Motor neuron (in vitro differentiated cells): ENCODE measurements at regions of chr4 and their contacts with region 1.

Region 1: GRCh38 chr4:1809754-1810511 is 16.8 kb downstream of the FGFR3 start:
- ATAC-seq: peak; percentile 80 to 93 (median 90)
- H3K4me3 ChIP-seq: no peak overlapping the region
- H3K27ac ChIP-seq: peak overlapping the region in 1 of 2 donors; percentile 0
- H3K4me1 ChIP-seq: peaks cover 0 to 4% of the 10 kb centered on the region in 2 donors

Region 2: GRCh38 chr4:1752284-1753041 is 57.5 kb before region 1 on chr4:
- in situ Hi-C with region 1: loop called in 1 of 9 experiments (anchors 10 kb)
- ATAC-seq: peak in 1 of 8 experiments; percentile 1
- H3K4me3 ChIP-seq: no peak overlapping the region
- H3K27ac ChIP-seq: no peak overlapping the region
- H3K4me1 ChIP-seq: peaks cover 13 to 50% of the 10 kb centered on the region in 2 donors